ENCODE measurements at regions of chr19 and their contacts with region 1.

Region 1: DNA sequence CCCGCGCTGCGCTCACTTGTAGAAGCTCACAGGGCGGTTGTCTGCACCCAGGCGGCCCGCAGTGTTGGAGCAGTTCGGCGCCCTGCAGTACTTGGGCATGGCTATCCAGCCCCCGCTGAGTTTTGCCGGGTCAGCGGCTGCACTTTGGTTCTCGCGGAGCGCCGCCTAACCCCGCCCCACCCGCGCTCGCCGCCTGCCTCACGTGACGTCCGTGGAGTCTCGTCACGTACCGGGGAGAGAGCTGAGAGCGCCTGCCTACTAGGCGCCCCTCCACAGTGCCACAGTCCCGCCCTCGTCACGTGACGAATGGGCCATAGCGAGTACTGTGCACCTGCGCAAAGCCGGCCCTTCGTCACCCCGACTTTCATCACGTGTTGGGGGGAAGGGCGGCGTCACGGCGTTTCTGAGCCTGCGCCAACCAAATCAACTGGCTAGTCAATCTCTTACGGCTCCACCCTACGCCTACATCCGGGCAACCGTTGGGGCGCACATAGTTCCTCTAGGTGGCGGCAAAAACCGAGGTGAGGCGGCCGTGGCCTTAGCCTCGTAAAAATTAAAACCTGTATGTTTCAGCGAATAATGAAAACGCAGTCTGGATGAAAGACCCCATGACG is at the start of gene THAP8:
- DNase-seq: peak; percentile 100
- H3K4me3 ChIP-seq: peak within 1 kb of the TSS; percentile 15 to 75 (median 41)
- H3K27ac ChIP-seq: peak within 1 kb of the TSS; percentile 90 to 99 (median 94)
- H3K4me1 ChIP-seq: peaks cover 0 to 9% of the 10 kb centered on the region in 2 donors
- H3K27me3 ChIP-seq: no peaks in the 10 kb centered on the region
- CTCF ChIP-seq: peak; percentile 37 to 78 (median 52)
- POLR2A ChIP-seq: peak; percentile 39 to 84
- total RNA-seq, gene THAP8: 3.2 to 15.9 (median 7.5) TPM

Region 2: GRCh38 chr19:36014029-36014924 is 39.9 kb before region 1 on chr19 and contains the start of gene ALKBH6:
- intact Hi-C with region 1: loop called in 1 of 2 experiments (anchors 5 kb)
- DNase-seq: peak; percentile 99 to 100 (median 100)
- H3K4me3 ChIP-seq: peak within 1 kb of the TSS in 3 of 4 donors; percentile 39 to 57 (median 54)
- H3K27ac ChIP-seq: peak within 1 kb of the TSS in 4 of 5 donors; percentile 43 to 79 (median 68)
- H3K4me1 ChIP-seq: peaks cover 11 to 12% of the 10 kb centered on the region in 2 donors
- H3K27me3 ChIP-seq: no peaks in the 10 kb centered on the region
- CTCF ChIP-seq: peak in 1 of 6 experiments; percentile 2
- POLR2A ChIP-seq: peak in 1 of 2 donors; percentile 22
- total RNA-seq, gene ALKBH6: 16.8 to 30.6 (median 23.7) TPM

Region 3: GRCh38 chr19:36169084-36169760 is 115.0 kb after region 1 on chr19:
- intact Hi-C with region 1: loop called in 1 of 2 experiments (anchors 5 kb)
- DNase-seq: peak in 4 of 7 donors; percentile 28 to 73 (median 31)
- H3K4me3 ChIP-seq: no peak overlapping the region
- H3K27ac ChIP-seq: peak overlapping the region in 2 of 5 donors; percentile 24 to 47
- H3K4me1 ChIP-seq: no peaks in the 10 kb centered on the region
- H3K27me3 ChIP-seq: no peaks in the 10 kb centered on the region
- CTCF ChIP-seq: no peak
- POLR2A ChIP-seq: no peak